BJ (cell line): ENCODE measurements at regions of chr19 and their contacts with region 1.

Region 1: DNA sequence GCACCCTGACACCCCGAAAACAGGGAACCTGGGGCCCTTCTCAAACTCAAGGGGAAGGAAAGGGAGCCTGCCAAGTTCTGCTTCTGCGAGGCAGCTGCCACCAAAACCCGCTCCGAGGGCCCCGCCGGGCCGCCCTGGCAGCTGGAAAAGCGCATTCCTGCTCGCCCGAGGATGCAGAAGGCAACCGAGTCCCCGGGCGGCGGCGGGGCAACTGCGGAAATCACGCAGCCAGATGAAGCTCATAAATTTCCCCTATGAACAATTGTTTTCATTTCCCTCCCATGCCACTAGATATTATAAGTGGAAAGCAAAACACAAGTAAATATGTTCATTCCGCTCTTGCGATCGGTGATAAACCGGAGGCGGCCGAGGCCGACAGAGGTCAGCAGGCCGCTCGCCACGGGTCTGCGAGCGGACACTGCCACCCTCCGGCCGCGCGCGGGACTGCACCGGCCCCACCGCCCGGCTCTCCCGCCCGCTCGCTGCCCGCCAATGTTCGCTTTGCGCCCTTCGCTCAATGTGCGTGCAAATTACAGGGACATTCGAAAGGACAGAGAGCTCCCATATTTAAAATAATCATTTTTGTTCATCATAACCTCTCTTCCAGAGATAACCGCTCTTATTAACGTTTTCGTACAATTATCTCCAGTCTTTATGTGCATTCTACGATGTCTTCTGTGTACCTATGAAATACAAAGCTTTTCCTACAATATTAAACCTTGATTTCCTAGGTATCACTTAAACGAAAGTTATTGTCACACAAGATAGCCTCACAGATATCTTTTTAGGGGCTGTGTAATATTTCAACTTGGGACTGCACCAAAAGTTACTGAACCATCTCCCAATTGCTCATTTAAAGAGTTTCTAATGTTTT is 120.8 kb upstream of the ZNF507 start:
- DNase-seq: no peak
- H3K4me3 ChIP-seq: peak overlapping the region; percentile 23
- H3K27me3 ChIP-seq: no peaks in the 10 kb centered on the region
- CTCF ChIP-seq: peak; percentile 71

Region 2: DNA sequence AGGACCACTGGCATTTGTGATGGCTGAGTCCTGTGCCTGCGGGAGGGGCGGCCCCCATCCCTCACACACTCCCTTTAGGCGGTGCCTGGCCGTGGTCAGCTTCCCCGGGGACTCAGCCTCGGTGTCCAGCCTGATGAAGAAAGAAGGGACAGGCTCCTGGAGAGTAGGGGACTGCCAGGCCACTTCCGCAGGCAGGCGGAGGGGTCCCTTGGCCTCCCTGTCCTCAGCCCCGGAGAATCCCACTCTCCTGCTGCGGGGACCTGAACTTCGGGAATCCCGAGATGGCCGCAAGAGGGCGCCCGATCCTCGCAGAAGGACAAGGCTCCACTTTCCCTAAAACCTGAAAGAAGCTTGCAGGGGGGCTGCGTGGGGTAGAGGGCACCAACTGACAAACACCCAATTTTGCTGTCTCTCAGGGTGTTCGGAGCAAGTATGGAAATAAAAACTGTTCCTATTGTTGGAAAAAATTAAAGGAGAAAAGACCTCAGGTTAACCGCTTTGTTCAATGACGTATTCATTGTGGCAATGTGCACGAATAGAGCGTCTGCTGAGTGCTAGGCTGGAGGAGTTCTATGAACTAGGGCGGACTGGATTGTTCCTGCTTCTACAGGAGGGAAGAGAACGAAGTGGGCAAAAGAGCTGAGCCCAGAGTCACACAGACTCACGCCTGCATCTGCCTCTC is 1555.1 kb before region 1 on chr19:
- CTCF ChIA-PET with region 1: interaction called, 34 read pairs
- POLR2A ChIA-PET with region 1: no interaction called
- DNase-seq: no peak
- H3K4me3 ChIP-seq: no peak overlapping the region
- H3K27me3 ChIP-seq: 0 out of 2 replicates have a peak, but pooled peaks cover 2% of the 10 kb centered on the region
- CTCF ChIP-seq: peak; percentile 87

Region 3: DNA sequence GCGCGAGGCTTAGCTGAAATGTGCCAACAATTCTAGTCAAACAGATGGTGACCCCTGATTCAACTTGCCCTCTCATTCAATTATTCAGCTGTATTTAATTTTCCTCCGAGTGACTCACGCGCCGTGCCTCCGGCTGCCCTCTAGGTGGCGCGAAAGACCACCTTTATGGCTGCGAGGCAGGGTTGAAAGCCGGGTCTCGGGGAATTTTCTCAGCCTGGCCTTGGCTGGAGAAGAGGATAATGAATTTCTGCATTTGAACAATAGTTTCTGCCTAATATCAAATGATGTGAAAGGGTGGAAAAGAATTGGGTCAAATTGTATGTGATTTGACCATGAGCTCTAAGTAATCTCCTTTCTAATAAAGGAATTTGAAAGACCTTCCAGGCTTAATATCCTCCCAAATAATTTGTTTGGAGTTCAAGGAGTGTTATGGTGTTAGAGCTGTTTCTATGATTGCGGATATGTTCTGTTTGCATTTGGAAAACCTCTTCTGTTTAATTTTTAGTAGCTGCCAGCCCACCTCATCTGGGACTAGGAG is 1541.5 kb before region 1 on chr19:
- CTCF ChIA-PET with region 1: interaction called, 40 read pairs
- POLR2A ChIA-PET with region 1: no interaction called
- DNase-seq: peak; percentile 66
- H3K4me3 ChIP-seq: no peak overlapping the region
- H3K27me3 ChIP-seq: peaks cover 10% of the 10 kb centered on the region
- CTCF ChIP-seq: peak; percentile 89

Region 4: DNA sequence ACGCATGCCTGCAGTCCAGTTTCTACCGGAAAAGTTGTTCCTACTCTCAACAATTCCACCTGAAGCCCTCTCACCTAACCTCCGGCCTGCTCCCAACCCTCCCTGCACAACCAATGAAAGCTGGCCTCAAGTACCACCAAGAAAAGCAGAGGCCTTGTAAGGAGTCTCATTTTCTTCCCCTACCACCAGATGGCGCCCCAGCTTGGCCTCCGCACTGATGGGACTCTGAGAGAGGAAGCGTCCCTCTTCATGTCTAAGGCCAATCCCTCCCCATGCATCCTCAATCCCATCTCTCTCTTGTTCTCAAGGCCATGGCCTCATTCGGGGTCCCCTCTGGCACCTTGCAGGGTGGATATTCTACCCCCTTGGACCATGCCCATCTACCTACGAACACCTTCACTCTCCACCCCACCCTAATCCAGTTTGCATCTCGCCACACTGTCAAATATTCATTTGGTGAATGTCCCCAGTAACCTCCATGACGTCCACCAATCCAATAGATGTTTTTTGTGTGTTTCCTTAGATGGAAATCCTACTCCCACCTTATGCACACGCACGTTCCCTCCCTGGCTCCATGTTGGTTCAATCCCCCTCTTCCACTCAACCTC is 1439.7 kb before region 1 on chr19:
- CTCF ChIA-PET with region 1: interaction called, 17 read pairs
- POLR2A ChIA-PET with region 1: no interaction called
- DNase-seq: no peak
- H3K4me3 ChIP-seq: no peak overlapping the region
- H3K27me3 ChIP-seq: no peaks in the 10 kb centered on the region
- CTCF ChIP-seq: peak; percentile 70

Region 5: GRCh38 chr19:31054430-31054829 is 1170.2 kb before region 1 on chr19:
- CTCF ChIA-PET with region 1: interaction called, 18 read pairs
- POLR2A ChIA-PET with region 1: no interaction called
- DNase-seq: no peak
- H3K4me3 ChIP-seq: no peak overlapping the region
- H3K27me3 ChIP-seq: 0 out of 2 replicates have a peak, but pooled peaks cover 2% of the 10 kb centered on the region
- CTCF ChIP-seq: peak; percentile 83

Region 6: GRCh38 chr19:32238076-32238475 is 13.5 kb after region 1 on chr19:
- CTCF ChIA-PET with region 1: interaction called, 11 read pairs
- POLR2A ChIA-PET with region 1: no interaction called
- DNase-seq: no peak
- H3K4me3 ChIP-seq: no peak overlapping the region
- H3K27me3 ChIP-seq: no peaks in the 10 kb centered on the region
- CTCF ChIP-seq: no peak

Region 7: DNA sequence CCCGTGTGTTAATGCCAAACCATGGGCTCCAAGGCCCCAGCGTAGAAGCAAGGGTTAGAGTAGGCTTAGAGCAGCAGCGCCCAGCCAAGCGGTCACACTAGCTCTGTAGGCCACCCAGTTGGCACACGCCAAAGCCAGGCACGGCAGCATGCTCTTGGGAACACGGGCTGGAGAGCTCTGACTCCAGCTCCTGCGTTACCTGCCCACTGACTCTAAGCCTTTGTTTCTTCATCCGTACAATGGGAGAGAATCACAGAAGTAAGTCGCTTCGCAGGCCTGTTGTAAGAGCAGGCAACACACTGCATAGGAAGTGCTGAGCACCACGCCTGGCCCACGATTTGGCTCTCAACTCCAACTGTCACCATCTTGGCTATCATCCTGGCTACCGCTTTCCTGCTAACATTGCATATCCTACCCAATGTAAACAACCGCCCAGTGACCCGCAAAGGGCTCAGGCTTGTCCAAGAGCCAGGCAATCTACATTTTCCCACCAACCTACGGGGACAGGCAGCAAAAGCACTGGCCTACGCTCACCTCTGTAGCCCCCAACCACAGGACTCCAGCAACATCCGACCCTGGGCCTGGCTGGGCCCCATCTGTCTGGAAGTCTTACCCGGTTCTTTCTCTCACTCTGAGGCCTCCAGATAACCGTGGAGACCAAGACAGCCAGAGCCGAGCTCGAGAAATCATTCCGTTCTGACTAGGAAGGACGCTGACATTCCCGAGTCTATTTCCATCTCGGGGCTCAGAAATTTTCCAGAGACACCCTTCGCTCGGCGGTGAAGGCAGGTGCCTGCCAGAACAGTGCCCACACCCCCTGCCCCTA is 29.3 kb after region 1 on chr19:
- CTCF ChIA-PET with region 1: no interaction called
- POLR2A ChIA-PET with region 1: no interaction called
- DNase-seq: no peak
- H3K4me3 ChIP-seq: no peak overlapping the region
- H3K27me3 ChIP-seq: no peaks in the 10 kb centered on the region
- CTCF ChIP-seq: no peak

Region 8: GRCh38 chr19:32265995-32266394 is 41.4 kb after region 1 on chr19:
- CTCF ChIA-PET with region 1: no interaction called
- POLR2A ChIA-PET with region 1: no interaction called
- DNase-seq: no peak
- H3K4me3 ChIP-seq: no peak overlapping the region
- H3K27me3 ChIP-seq: no peaks in the 10 kb centered on the region
- CTCF ChIP-seq: no peak